ENCODE measurements at regions of chr4 and their contacts with region 1.

Region 1: DNA sequence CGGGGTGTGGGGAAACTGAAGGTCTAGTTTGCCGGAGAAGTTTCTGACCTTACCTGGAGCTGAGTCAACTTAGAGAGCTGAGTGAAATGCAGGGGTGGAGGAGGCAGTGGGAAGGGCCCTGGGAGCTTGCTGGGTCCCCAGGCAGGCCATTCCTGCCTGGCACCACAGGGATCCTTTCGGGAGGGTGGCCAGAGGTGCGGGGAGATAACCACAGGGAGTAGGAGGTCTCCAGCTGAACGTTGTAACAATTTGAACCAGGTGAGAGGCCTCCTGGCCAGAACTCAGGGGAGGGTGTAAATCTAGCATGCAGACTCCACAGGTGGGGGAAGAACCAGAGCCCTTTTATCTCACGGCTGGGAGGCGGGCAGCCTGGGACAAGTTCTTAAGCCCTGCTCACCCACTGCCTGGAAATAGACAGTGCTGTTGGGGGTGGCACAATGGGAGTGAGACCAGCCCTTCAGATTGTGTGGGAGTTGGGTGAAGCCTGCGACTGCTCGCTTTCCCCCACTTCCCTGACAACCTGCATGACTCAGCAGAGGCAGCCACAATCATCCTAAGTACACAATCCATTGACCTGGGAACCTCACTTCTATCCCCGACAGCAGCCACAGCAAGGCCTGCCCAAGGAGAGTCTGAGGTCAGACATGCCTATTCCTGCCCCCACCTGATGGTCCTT is 247.4 kb downstream of the ADGRA3 start:
- DNase-seq: no peak
- H3K4me3 ChIP-seq: no peak overlapping the region
- CTCF ChIP-seq: no peak
- POLR2A ChIP-seq: no peak

Region 2: GRCh38 chr4:21061902-21062301 is 1206.6 kb before region 1 on chr4:
- intact Hi-C with region 1: no loop called
- DNase-seq: no peak
- H3K4me3 ChIP-seq: no peak overlapping the region
- CTCF ChIP-seq: no peak
- POLR2A ChIP-seq: no peak

Region 3: GRCh38 chr4:23768541-23768940 is 1500.1 kb after region 1 on chr4:
- intact Hi-C with region 1: loop called (anchors 5 kb)
- DNase-seq: no peak
- H3K4me3 ChIP-seq: no peak overlapping the region
- CTCF ChIP-seq: no peak
- POLR2A ChIP-seq: no peak

Measured in lower leg skin (tissue), 4 donors.